ENCODE measurements at regions of chrX and their contacts with region 1.

Region 1: DNA sequence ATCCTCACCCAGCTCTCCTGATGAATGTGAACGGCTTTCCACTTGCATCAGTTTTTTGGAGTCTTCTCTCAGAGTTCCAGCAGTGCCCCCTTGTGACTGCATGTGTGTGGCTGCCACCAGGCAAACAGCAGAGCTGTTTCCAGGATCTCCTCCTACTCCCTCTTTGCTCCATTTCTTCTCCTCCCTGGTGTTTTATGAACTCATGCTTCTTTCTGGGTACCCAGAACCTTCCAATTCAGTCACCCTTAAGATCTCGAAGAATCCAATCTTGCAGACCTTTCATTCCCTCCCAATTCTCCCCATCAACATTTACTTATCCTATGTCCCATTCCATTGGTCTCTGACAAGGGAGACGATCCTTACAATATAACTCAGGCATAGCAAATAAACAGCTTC is 6.8 kb upstream of the TCEANC start:
- DNase-seq: no peak
- H3K4me3 ChIP-seq: no peak overlapping the region
- H3K27ac ChIP-seq: no peak overlapping the region
- H3K4me1 ChIP-seq: peaks cover 0 to 12% (median 0%) of the 10 kb centered on the region in 3 donors
- H3K27me3 ChIP-seq: no peaks in the 10 kb centered on the region
- CTCF ChIP-seq: peak; percentile 31 to 67 (median 56)
- POLR2A ChIP-seq: no peak

Region 2: DNA sequence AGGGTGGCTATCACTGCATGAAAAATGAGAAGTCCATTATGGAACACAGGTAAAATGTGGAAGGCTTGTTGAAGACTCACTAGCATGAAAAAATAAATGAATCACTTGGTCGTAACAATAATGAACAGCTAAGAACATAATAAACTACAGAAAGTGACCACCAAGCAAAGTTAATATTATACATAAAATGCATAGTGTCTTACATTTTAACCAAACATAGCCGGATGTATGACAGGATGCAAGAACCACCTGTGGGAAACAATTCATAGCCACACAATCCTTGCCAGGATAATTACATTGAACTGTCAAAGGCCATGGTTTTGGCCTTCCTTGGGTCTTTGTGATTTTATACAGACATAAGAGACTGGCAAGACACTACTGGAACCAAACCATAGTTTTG is 244.4 kb before region 1 on chrX:
- intact Hi-C with region 1: no loop called
- DNase-seq: no peak
- H3K4me3 ChIP-seq: no peak overlapping the region
- H3K27ac ChIP-seq: no peak overlapping the region
- H3K4me1 ChIP-seq: peaks cover 0 to 16% (median 7%) of the 10 kb centered on the region in 3 donors
- H3K27me3 ChIP-seq: no peaks in the 10 kb centered on the region
- CTCF ChIP-seq: no peak
- POLR2A ChIP-seq: no peak

Region 3: GRCh38 chrX:13506574-13506973 is 139.6 kb before region 1 on chrX:
- intact Hi-C with region 1: loop called (anchors 5 kb)
- DNase-seq: no peak
- H3K4me3 ChIP-seq: no peak overlapping the region
- H3K27ac ChIP-seq: no peak overlapping the region
- H3K4me1 ChIP-seq: no peaks in the 10 kb centered on the region
- H3K27me3 ChIP-seq: no peaks in the 10 kb centered on the region
- CTCF ChIP-seq: peak; percentile 33 to 81 (median 70)
- POLR2A ChIP-seq: no peak

Measured in esophagus squamous epithelium (tissue), 5 donors.